ENCODE measurements at regions of chr7 and their contacts with region 1.

Region 1: GRCh38 chr7:12322284-12322902 is 81.3 kb downstream of the VWDE start:
- DNase-seq: peak; percentile 38
- H3K4me3 Mint-ChIP-seq: no peak overlapping the region
- H3K27ac Mint-ChIP-seq: no peak overlapping the region
- H3K4me1 Mint-ChIP-seq: no peaks in the 10 kb centered on the region
- H3K27me3 Mint-ChIP-seq: no peaks in the 10 kb centered on the region
- CTCF ChIP-seq: peak; percentile 66

Region 2: GRCh38 chr7:11373546-11374142 is 948.7 kb before region 1 on chr7:
- CTCF ChIA-PET with region 1: interaction called, 3 read pairs
- POLR2A ChIA-PET with region 1: no interaction called
- intact Hi-C with region 1: loop called (anchors 5 kb)
- DNase-seq: peak; percentile 33
- H3K4me3 Mint-ChIP-seq: no peak overlapping the region
- H3K27ac Mint-ChIP-seq: no peak overlapping the region
- H3K4me1 Mint-ChIP-seq: no peaks in the 10 kb centered on the region
- H3K27me3 Mint-ChIP-seq: peaks cover 39% of the 10 kb centered on the region
- CTCF ChIP-seq: peak; percentile 45

Region 3: GRCh38 chr7:11427686-11428273 is 894.6 kb before region 1 on chr7:
- CTCF ChIA-PET with region 1: interaction called, 3 read pairs
- POLR2A ChIA-PET with region 1: no interaction called
- intact Hi-C with region 1: loop called (anchors 1 kb)
- DNase-seq: peak; percentile 67
- H3K4me3 Mint-ChIP-seq: no peak overlapping the region
- H3K27ac Mint-ChIP-seq: no peak overlapping the region
- H3K4me1 Mint-ChIP-seq: no peaks in the 10 kb centered on the region
- H3K27me3 Mint-ChIP-seq: no peaks in the 10 kb centered on the region
- CTCF ChIP-seq: peak; percentile 59

Region 4: DNA sequence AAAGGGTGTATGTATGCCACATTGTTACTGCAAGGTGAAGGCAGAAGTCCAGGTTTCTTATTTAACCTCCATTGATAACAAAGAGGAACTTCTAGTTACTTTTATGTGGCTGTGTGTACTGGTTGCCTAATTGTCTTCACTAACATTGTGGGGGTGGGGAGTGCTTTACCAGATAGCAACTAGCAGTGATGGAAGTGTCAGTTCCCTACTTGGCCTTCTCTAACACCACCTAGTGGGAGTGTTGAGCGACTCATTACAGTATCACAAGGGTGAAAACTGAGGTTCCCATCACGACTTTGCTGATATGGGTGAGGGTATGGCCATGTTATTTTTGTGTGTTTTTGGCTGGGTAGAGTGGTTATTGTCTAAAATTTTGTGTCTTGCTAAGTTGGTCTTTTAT is 764.8 kb before region 1 on chr7:
- CTCF ChIA-PET with region 1: no interaction called
- POLR2A ChIA-PET with region 1: no interaction called
- intact Hi-C with region 1: loop called (anchors 10 kb)
- DNase-seq: peak; percentile 79
- H3K4me3 Mint-ChIP-seq: no peak overlapping the region
- H3K27ac Mint-ChIP-seq: no peak overlapping the region
- H3K4me1 Mint-ChIP-seq: no peaks in the 10 kb centered on the region
- H3K27me3 Mint-ChIP-seq: no peaks in the 10 kb centered on the region
- CTCF ChIP-seq: peak; percentile 40

Region 5: GRCh38 chr7:11831736-11832495 is 490.5 kb before region 1 on chr7 and contains the start of gene THSD7A:
- CTCF ChIA-PET with region 1: interaction called, 12 read pairs
- POLR2A ChIA-PET with region 1: no interaction called
- intact Hi-C with region 1: loop called (anchors 1 kb)
- DNase-seq: peak; percentile 18
- H3K4me3 Mint-ChIP-seq: peak within 1 kb of the TSS; percentile 68
- H3K27ac Mint-ChIP-seq: no peak within 1 kb of the TSS
- H3K4me1 Mint-ChIP-seq: no peaks in the 10 kb centered on the region
- H3K27me3 Mint-ChIP-seq: peaks cover 46% of the 10 kb centered on the region
- CTCF ChIP-seq: no peak
- total RNA-seq, gene THSD7A: not detected in 2 replicates

Region 6: DNA sequence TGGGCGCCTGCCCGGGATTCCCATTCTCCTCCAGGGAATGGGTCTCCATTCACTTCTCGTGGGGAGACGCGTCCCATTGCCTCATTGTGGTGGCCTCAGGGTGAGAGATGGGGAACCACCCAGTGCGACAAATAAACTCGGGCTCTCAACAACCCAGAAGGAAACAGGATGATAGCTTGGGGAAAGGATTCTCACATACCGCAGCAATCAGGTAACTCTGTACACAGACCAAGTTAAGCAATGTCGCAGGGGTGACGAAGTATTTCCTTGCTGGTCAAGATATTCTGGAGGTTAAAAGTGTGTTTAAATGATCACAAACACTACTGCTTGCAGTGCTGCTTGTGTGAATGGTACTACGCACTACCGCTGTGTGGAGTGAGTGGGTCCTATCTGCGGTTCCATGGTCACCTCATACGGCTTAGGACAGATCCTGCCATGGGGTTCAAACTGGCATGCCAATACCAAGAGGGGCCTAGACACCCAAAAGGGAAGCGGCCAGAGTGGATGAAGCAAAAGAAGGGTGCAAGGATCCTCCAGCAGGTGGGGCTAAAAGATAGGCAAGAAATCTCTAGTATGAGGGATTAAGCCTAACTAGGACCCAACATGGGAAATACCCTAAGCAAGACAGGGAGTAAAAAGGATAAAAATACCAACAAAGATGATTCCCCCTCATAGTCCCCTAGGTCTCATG is 255.1 kb before region 1 on chr7:
- CTCF ChIA-PET with region 1: interaction called, 16 read pairs
- POLR2A ChIA-PET with region 1: no interaction called
- intact Hi-C with region 1: loop called (anchors 1 kb)
- DNase-seq: peak; percentile 75
- H3K4me3 Mint-ChIP-seq: no peak overlapping the region
- H3K27ac Mint-ChIP-seq: no peak overlapping the region
- H3K4me1 Mint-ChIP-seq: peaks cover 12% of the 10 kb centered on the region
- H3K27me3 Mint-ChIP-seq: no peaks in the 10 kb centered on the region
- CTCF ChIP-seq: peak; percentile 59

Region 7: GRCh38 chr7:12211054-12211710 is 111.2 kb before region 1 on chr7 and contains the start of gene TMEM106B:
- CTCF ChIA-PET with region 1: interaction called, 8 read pairs
- POLR2A ChIA-PET with region 1: interaction called, 9 read pairs
- intact Hi-C with region 1: loop called (anchors 2 kb)
- DNase-seq: peak; percentile 97
- H3K4me3 Mint-ChIP-seq: peak within 1 kb of the TSS; percentile 90
- H3K27ac Mint-ChIP-seq: peak within 1 kb of the TSS; percentile 84
- H3K4me1 Mint-ChIP-seq: peaks cover 15% of the 10 kb centered on the region
- H3K27me3 Mint-ChIP-seq: peaks cover 28% of the 10 kb centered on the region
- CTCF ChIP-seq: no peak
- total RNA-seq, gene TMEM106B: 33.7 and 41.7 TPM in 2 replicates

Region 8: DNA sequence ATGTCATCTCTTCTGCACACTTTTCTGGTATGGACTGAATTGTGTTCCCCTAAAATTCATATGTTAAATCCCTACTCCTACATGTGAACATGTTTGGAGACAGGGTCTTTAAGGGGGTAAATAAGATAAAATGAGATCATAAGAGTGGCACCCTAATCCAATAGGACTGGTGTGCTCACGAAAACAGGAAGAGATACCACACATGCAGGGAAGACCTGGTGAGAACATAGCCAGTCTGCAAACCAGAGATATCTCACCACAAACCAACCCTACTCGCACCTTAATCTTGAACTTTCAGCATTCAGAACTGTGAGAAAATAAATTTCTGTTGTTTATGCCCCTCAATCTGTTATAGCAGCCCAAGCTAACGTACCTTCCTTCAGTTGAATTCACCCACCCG is 29.4 kb after region 1 on chr7:
- CTCF ChIA-PET with region 1: no interaction called
- POLR2A ChIA-PET with region 1: no interaction called
- intact Hi-C with region 1: no loop called
- DNase-seq: no peak
- H3K4me3 Mint-ChIP-seq: no peak overlapping the region
- H3K27ac Mint-ChIP-seq: no peak overlapping the region
- H3K4me1 Mint-ChIP-seq: no peaks in the 10 kb centered on the region
- H3K27me3 Mint-ChIP-seq: no peaks in the 10 kb centered on the region
- CTCF ChIP-seq: no peak

Measured in MCF 10A (cell line).